PC-3 (cell line): ENCODE measurements at regions of chr4 and their contacts with region 1.

Region 1: GRCh38 chr4:120718979-120719566 is 203.5 kb downstream of the PRDM5 start:
- DNase-seq: peak; percentile 51
- ATAC-seq: peak; percentile 79
- H3K4me3 ChIP-seq: no peak overlapping the region
- H3K27ac ChIP-seq: no peak overlapping the region
- H3K4me1 ChIP-seq: no peaks in the 10 kb centered on the region
- H3K27me3 ChIP-seq: no peaks in the 10 kb centered on the region
- CTCF ChIP-seq: peak; percentile 73

Region 2: GRCh38 chr4:120071192-120071795 is 647.8 kb before region 1 on chr4:
- CTCF ChIA-PET with region 1: no interaction called
- POLR2A ChIA-PET with region 1: no interaction called
- intact Hi-C with region 1: loop called (anchors 5 kb)
- DNase-seq: peak; percentile 70
- ATAC-seq: no peak
- H3K4me3 ChIP-seq: no peak overlapping the region
- H3K27ac ChIP-seq: no peak overlapping the region
- H3K4me1 ChIP-seq: peaks cover 18% of the 10 kb centered on the region
- H3K27me3 ChIP-seq: no peaks in the 10 kb centered on the region
- CTCF ChIP-seq: peak; percentile 73

Region 3: GRCh38 chr4:120819805-120820437 is 100.8 kb after region 1 on chr4:
- CTCF ChIA-PET with region 1: no interaction called
- POLR2A ChIA-PET with region 1: no interaction called
- intact Hi-C with region 1: no loop called
- DNase-seq: no peak
- ATAC-seq: no peak
- H3K4me3 ChIP-seq: no peak overlapping the region
- H3K27ac ChIP-seq: no peak overlapping the region
- H3K4me1 ChIP-seq: no peaks in the 10 kb centered on the region
- H3K27me3 ChIP-seq: no peaks in the 10 kb centered on the region
- CTCF ChIP-seq: no peak

Region 4: DNA sequence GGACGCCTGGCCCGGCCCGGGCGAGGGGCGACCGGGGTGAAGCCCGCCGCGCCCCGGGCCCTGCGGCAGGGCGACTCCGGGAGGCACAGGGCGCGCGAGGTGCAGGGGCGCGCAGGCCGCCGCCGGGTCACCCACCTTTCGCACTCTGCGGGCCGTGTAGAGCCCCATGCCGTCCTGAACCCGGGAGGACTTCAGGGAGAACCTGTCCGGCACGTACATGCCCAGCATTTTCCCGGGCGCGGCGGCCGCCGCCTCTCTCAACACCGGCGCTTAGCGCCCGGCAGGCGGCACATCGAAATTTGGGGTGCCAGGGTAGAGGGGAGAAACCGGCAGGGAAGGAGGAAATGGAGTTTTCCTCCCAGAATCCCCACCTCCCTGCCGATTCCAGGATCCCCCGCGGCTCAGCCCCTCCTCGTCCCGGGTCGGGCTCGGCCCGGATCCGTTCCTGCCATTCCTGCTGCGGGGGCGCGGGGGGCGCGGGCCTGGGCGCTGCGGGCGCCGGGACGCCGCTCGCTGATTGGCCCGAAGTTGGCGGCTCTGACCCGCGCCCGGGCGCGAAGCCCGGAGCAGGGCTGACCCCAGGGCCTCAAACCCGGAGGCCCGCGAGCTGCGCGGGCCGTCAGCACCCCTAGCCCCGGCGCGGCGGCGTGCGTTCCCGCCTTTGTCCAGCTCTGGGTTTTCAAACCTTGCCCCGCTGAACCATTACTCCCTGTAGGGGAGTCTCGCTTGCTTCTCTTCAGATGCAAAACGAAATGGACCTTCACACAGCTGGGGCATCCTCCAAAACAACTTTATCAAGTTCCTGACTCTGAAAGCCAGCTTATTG is 203.5 kb after region 1 on chr4 and contains the start of gene PRDM5:
- CTCF ChIA-PET with region 1: no interaction called
- POLR2A ChIA-PET with region 1: no interaction called
- intact Hi-C with region 1: loop called (anchors 2 kb)
- DNase-seq: peak; percentile 21
- ATAC-seq: peak; percentile 57
- H3K4me3 ChIP-seq: peak within 1 kb of the TSS; percentile 89
- H3K27ac ChIP-seq: peak within 1 kb of the TSS; percentile 39
- H3K4me1 ChIP-seq: peaks cover 21% of the 10 kb centered on the region
- H3K27me3 ChIP-seq: no peaks in the 10 kb centered on the region
- CTCF ChIP-seq: no peak
- total RNA-seq, gene PRDM5: 2.4 and 3.9 TPM in 2 replicates

Region 5: GRCh38 chr4:121050300-121050699 is 331.2 kb after region 1 on chr4:
- CTCF ChIA-PET with region 1: no interaction called
- POLR2A ChIA-PET with region 1: no interaction called
- intact Hi-C with region 1: loop called (anchors 1 kb)
- DNase-seq: peak; percentile 20
- ATAC-seq: peak; percentile 42
- H3K4me3 ChIP-seq: no peak overlapping the region
- H3K27ac ChIP-seq: no peak overlapping the region
- H3K4me1 ChIP-seq: peaks cover 9% of the 10 kb centered on the region; the same call in 1 of the 2 replicates
- H3K27me3 ChIP-seq: no peaks in the 10 kb centered on the region
- CTCF ChIP-seq: peak; percentile 47

Region 6: GRCh38 chr4:121252224-121252806 is 533.2 kb after region 1 on chr4:
- CTCF ChIA-PET with region 1: no interaction called
- POLR2A ChIA-PET with region 1: no interaction called
- intact Hi-C with region 1: loop called (anchors 5 kb)
- DNase-seq: peak; percentile 75
- ATAC-seq: peak; percentile 69
- H3K4me3 ChIP-seq: no peak overlapping the region
- H3K27ac ChIP-seq: no peak overlapping the region
- H3K4me1 ChIP-seq: no peaks in the 10 kb centered on the region
- H3K27me3 ChIP-seq: peaks cover 3% of the 10 kb centered on the region; the same call in 1 of the 2 replicates
- CTCF ChIP-seq: peak; percentile 80

Region 7: DNA sequence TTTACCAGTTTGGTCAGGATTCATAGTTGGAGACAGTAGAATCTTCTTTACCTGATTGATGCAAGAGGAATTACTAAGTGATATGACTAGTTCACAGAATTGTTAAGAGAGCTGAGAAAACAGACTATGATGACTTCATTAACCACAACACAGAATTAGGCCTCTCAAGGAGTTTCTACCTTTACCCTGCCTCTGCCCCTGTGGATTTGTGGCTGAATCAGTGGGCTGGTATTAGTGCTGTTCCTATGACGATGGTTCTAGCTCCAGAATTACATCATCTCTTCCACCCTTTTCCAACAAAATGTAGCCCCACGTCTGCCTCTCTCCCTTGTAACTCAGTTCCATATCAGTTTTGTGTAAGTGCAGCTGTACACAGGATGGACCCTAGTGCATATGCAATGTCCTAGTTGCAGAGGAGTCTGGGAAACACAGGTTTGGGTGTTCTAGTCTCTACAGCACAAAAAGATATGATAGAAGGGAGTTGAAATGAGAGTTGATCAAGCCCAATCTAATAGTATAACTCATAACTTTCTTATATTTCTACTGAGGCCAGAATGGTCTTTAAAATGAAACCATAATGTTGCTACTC is 878.4 kb after region 1 on chr4:
- CTCF ChIA-PET with region 1: no interaction called
- POLR2A ChIA-PET with region 1: no interaction called
- intact Hi-C with region 1: no loop called
- DNase-seq: peak; percentile 19
- ATAC-seq: no peak
- H3K4me3 ChIP-seq: no peak overlapping the region
- H3K27ac ChIP-seq: no peak overlapping the region
- H3K4me1 ChIP-seq: no peaks in the 10 kb centered on the region
- H3K27me3 ChIP-seq: no peaks in the 10 kb centered on the region
- CTCF ChIP-seq: no peak